ENCODE measurements at regions of chr10 and their contacts with region 1.

Region 1: GRCh38 chr10:87861953-87862678 is 1.2 kb downstream of the KLLN start:
- DNase-seq: peak; percentile 79 to 94 (median 83)
- ATAC-seq: peak; percentile 60
- H3K4me3 ChIP-seq: peak overlapping the region; percentile 88
- H3K27ac ChIP-seq: peak overlapping the region; percentile 79
- H3K4me1 ChIP-seq: peaks cover 3 to 11% of the 10 kb centered on the region in 2 experiments; a peak in 4 of 5 replicates
- H3K27me3 ChIP-seq: no peaks in the 10 kb centered on the region
- CTCF ChIP-seq: no peak
- EP300 ChIP-seq: no peak
- POLR2A ChIP-seq: peak; percentile 78
- RAD21 ChIP-seq: no peak

Region 2: DNA sequence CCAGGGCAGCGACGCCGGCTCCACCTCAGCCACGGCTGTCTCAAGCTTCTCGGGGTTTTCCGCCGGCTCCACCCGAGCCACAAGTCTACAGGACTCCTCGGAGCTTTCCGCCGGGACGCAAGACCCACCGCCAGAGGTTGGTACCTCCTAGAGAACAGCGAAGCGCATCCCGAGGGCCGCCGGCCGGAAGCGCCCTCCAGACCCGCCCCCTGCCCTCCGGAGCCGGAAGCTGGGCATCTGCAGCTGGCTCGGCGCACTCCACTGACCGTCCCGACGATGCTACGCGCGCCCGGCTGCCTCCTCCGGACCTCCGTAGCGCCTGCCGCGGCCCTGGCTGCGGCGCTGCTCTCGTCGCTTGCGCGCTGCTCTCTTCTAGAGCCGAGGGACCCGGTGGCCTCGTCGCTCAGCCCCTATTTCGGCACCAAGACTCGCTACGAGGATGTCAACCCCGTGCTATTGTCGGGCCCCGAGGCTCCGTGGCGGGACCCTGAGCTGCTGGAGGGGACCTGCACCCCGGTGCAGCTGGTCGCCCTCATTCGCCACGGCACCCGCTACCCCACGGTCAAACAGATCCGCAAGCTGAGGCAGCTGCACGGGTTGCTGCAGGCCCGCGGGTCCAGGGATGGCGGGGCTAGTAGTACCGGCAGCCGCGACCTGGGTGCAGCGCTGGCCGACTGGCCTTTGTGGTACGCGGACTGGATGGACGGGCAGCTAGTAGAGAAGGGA is 357.3 kb before region 1 on chr10 and contains the start of gene MINPP1:
- CTCF ChIA-PET with region 1: no interaction called
- POLR2A ChIA-PET with region 1: no interaction called
- in situ Hi-C with region 1: no loop called
- intact Hi-C with region 1: loop called (anchors 2 kb)
- DNase-seq: peak; percentile 75 to 89 (median 78)
- ATAC-seq: peak; percentile 85
- H3K4me3 ChIP-seq: peak within 1 kb of the TSS; percentile 87
- H3K27ac ChIP-seq: peak within 1 kb of the TSS; percentile 82
- H3K4me1 ChIP-seq: peaks cover 9 to 11% of the 10 kb centered on the region in 2 experiments; a peak in 3 of 5 replicates
- H3K27me3 ChIP-seq: no peaks in the 10 kb centered on the region
- CTCF ChIP-seq: no peak
- EP300 ChIP-seq: no peak
- POLR2A ChIP-seq: peak; percentile 74
- RAD21 ChIP-seq: no peak
- polyA plus RNA-seq, gene MINPP1: 11.5 to 12.0 TPM

Region 3: DNA sequence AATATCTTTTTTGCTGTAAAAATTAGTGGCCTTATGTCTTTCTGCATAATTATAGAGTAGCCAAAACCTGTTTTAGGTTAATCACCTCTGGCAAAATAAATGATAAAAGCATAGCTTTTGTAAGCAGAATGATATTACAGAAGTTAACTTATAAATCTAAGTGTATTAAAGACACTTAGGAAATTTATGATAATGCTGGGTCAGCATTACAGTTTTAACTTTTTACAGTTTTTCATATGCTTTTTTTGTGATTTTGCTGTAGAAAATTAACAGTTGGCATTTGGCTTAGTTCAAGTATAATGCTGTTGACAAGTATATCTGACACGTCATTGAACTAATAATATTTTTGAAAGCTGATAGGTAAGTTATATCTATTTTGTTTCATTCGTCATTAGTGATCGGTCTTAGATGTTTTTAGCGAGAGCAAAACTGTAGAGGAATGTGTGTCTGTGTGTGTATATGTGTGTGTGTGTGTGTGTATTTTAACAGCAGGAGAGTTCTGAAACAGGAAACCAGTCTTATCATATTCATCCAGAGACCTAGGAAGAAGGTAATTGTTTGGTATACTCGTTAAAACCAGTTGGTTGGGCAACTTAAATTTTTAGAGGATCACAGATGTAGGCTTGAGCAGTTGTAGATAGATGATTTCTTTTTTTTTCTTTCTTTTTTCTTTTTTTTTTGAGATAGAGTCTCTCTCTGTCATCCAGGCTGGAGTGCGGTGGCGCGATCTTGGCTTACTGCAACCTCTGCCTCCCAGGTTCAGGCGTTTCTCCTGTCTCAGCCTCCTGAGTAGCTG is 16.7 kb after region 1 on chr10:
- CTCF ChIA-PET with region 1: no interaction called
- POLR2A ChIA-PET with region 1: interaction called, 11 read pairs
- in situ Hi-C with region 1: no loop called
- intact Hi-C with region 1: loop called (anchors 2 kb)
- DNase-seq: peak; percentile 24 to 73 (median 51)
- ATAC-seq: peak; percentile 90
- H3K4me3 ChIP-seq: peak overlapping the region; percentile 21
- H3K27ac ChIP-seq: peak overlapping the region; percentile 73
- H3K4me1 ChIP-seq: no peaks in the 10 kb centered on the region; a peak in 1 of 5 replicates
- H3K27me3 ChIP-seq: no peaks in the 10 kb centered on the region
- CTCF ChIP-seq: no peak
- EP300 ChIP-seq: peak; percentile 85; the same call in 1 of the 2 replicates
- POLR2A ChIP-seq: peak; percentile 50
- RAD21 ChIP-seq: no peak

Region 4: DNA sequence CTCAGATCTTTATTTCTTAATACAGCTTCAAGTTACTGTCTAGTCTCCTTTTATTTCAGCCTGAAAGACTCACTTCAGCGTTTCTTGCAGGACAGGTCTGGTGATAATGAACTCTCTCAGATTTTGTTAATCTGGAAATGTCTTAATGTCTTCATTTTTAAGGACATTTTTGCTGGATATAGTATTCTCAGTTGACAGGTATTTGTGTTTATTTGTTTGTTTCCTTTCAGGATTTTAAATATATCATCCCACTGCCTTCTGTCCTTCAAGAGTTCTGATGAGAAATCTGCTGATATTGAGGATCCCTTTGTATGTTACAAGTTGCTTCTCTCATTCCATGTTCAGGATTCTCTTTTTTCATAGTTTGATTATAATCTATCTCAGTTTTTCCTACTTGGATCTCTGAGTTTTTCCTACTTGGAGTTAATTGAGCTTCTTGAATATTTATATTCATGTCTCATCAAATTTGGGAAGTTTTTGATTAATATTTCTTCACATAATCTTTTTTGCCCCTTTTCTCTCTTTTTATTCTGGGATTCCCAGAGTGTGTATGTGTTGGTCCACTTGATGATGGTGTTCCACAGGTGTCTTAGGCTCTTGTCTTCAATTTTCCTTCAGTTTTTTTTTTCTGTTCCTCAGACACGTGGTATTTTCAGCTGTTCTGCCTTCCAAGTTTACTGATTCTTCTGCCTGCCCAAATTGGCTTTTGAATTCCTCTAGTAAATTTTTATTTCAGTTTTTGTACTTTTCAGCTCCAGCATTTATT is 51.2 kb after region 1 on chr10:
- CTCF ChIA-PET with region 1: no interaction called
- POLR2A ChIA-PET with region 1: no interaction called
- in situ Hi-C with region 1: no loop called
- intact Hi-C with region 1: no loop called
- DNase-seq: no peak
- ATAC-seq: no peak
- H3K4me3 ChIP-seq: no peak overlapping the region
- H3K27ac ChIP-seq: no peak overlapping the region
- H3K4me1 ChIP-seq: peaks cover 0 to 3% of the 10 kb centered on the region in 2 experiments; a peak in 1 of 5 replicates
- H3K27me3 ChIP-seq: no peaks in the 10 kb centered on the region
- CTCF ChIP-seq: no peak
- EP300 ChIP-seq: no peak
- POLR2A ChIP-seq: no peak
- RAD21 ChIP-seq: no peak

Region 5: GRCh38 chr10:88091490-88092105 is 229.5 kb after region 1 on chr10:
- CTCF ChIA-PET with region 1: no interaction called
- POLR2A ChIA-PET with region 1: interaction called, 3 read pairs
- in situ Hi-C with region 1: loop called (anchors 25 kb)
- intact Hi-C with region 1: no loop called
- DNase-seq: no peak
- ATAC-seq: no peak
- H3K4me3 ChIP-seq: no peak overlapping the region
- H3K27ac ChIP-seq: no peak overlapping the region
- H3K4me1 ChIP-seq: peaks cover 0 to 7% of the 10 kb centered on the region in 2 experiments; a peak in 2 of 5 replicates
- H3K27me3 ChIP-seq: no peaks in the 10 kb centered on the region
- CTCF ChIP-seq: no peak
- EP300 ChIP-seq: no peak
- POLR2A ChIP-seq: no peak
- RAD21 ChIP-seq: no peak

Region 6: GRCh38 chr10:88386821-88387773 is 525.0 kb after region 1 on chr10:
- CTCF ChIA-PET with region 1: no interaction called
- POLR2A ChIA-PET with region 1: no interaction called
- in situ Hi-C with region 1: no loop called
- intact Hi-C with region 1: loop called (anchors 5 kb)
- DNase-seq: no peak
- ATAC-seq: no peak
- H3K4me3 ChIP-seq: no peak overlapping the region
- H3K27ac ChIP-seq: no peak overlapping the region
- H3K4me1 ChIP-seq: no peaks in the 10 kb centered on the region
- H3K27me3 ChIP-seq: no peaks in the 10 kb centered on the region
- CTCF ChIP-seq: no peak
- EP300 ChIP-seq: no peak
- POLR2A ChIP-seq: no peak
- RAD21 ChIP-seq: no peak